Activated naive CD4-positive, alpha-beta T cell treated with anti-CD3 and anti-CD28 coated beads for 36 hours (primary cell): ENCODE measurements at regions of chr11 and their contacts with region 1.

Region 1: DNA sequence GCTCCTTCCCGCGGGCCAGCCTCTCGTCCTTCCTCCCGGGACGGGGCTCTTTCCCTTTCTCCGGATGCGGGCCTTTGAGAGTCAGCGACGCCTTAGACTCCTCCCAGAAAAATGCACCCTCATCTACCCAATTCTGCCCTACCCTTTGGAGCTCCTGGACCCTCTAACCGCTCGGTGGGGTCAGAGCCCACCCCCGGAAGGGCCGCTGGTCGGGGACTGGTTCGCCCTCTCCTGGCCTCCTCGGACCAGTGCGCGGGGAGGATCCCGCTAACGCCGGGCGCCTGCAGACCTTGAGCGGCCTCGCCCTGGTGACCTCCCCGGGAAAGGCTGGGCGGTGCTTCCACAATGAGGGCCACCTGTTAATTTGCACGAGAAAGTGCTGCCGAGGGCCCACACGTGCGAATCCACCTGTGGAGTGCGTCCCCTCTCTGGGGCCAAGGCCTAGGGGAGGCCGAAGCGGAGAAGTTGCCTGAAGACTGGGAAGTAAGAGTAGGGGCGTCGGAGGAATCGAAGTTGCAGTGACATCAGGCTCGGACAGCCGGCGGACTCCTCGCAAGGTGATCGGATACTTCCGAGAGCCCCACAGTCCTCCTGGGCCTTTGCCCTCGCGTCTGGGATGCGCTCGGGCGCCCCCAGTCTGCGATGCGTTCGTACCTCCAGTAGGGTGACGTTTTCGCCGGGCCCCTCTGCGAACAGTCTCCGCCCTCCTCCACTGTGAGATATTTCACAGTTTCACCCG is 61.5 kb downstream of the ENDOD1 start:
- DNase-seq: peak; percentile 96
- H3K4me3 Mint-ChIP-seq: peak overlapping the region; percentile 85
- H3K27ac Mint-ChIP-seq: peak overlapping the region; percentile 89
- H3K4me1 Mint-ChIP-seq: peaks cover 36% of the 10 kb centered on the region
- H3K27me3 Mint-ChIP-seq: peaks cover 5% of the 10 kb centered on the region

Region 2: GRCh38 chr11:94786264-94787126 is 364.6 kb before region 1 on chr11:
- CTCF ChIA-PET with region 1: no interaction called
- intact Hi-C with region 1: loop called (anchors 5 kb)
- DNase-seq: no peak
- H3K4me3 Mint-ChIP-seq: no peak overlapping the region
- H3K27ac Mint-ChIP-seq: no peak overlapping the region
- H3K4me1 Mint-ChIP-seq: no peaks in the 10 kb centered on the region
- H3K27me3 Mint-ChIP-seq: no peaks in the 10 kb centered on the region

Region 3: DNA sequence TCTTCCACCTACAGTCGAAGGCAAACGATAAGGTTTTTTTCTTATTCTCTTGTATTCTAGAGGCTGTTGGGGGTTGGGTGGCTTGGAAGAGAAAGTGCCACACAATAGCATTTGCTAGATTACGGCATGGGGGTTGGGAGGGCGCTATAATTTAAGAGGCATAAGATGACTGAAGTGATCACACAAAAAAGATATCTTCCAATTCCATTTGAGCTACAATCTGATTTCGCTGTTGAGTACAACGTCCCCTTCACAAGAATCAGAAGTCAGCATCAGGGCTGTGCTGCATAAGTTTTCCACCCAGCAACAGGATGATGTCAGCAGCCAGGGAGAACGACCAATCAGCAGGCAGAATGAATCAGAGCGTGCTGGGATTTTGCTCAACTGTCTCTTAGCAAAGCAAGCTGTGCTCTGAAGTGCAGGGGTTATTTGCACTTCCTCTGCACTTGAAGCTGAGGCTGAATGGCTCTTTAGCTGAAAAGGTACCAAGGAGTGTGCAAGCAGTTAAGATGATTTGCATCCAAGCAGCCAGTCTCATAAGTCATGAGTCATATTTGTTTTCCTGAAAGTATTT is 103.1 kb after region 1 on chr11:
- CTCF ChIA-PET with region 1: interaction called, 6 read pairs
- intact Hi-C with region 1: loop called (anchors 1 kb)
- DNase-seq: peak; percentile 95
- H3K4me3 Mint-ChIP-seq: peak overlapping the region; percentile 83
- H3K27ac Mint-ChIP-seq: peak overlapping the region; percentile 92
- H3K4me1 Mint-ChIP-seq: peaks cover 47% of the 10 kb centered on the region
- H3K27me3 Mint-ChIP-seq: no peaks in the 10 kb centered on the region

Region 4: GRCh38 chr11:95556342-95557163 is 405.4 kb after region 1 on chr11:
- CTCF ChIA-PET with region 1: interaction called, 12 read pairs
- intact Hi-C with region 1: loop called (anchors 1 kb)
- DNase-seq: peak; percentile 66
- H3K4me3 Mint-ChIP-seq: no peak overlapping the region
- H3K27ac Mint-ChIP-seq: peak overlapping the region; percentile 83
- H3K4me1 Mint-ChIP-seq: peaks cover 22% of the 10 kb centered on the region
- H3K27me3 Mint-ChIP-seq: no peaks in the 10 kb centered on the region

Region 5: GRCh38 chr11:95790123-95790932 is 639.2 kb after region 1 on chr11 and contains the start of gene CEP57:
- CTCF ChIA-PET with region 1: interaction called, 4 read pairs
- intact Hi-C with region 1: loop called (anchors 1 kb)
- DNase-seq: peak; percentile 98
- H3K4me3 Mint-ChIP-seq: peak within 1 kb of the TSS; percentile 99
- H3K27ac Mint-ChIP-seq: peak within 1 kb of the TSS; percentile 100
- H3K4me1 Mint-ChIP-seq: peaks cover 56% of the 10 kb centered on the region
- H3K27me3 Mint-ChIP-seq: no peaks in the 10 kb centered on the region
- total RNA-seq, gene CEP57: 110 to 115 TPM

Region 6: DNA sequence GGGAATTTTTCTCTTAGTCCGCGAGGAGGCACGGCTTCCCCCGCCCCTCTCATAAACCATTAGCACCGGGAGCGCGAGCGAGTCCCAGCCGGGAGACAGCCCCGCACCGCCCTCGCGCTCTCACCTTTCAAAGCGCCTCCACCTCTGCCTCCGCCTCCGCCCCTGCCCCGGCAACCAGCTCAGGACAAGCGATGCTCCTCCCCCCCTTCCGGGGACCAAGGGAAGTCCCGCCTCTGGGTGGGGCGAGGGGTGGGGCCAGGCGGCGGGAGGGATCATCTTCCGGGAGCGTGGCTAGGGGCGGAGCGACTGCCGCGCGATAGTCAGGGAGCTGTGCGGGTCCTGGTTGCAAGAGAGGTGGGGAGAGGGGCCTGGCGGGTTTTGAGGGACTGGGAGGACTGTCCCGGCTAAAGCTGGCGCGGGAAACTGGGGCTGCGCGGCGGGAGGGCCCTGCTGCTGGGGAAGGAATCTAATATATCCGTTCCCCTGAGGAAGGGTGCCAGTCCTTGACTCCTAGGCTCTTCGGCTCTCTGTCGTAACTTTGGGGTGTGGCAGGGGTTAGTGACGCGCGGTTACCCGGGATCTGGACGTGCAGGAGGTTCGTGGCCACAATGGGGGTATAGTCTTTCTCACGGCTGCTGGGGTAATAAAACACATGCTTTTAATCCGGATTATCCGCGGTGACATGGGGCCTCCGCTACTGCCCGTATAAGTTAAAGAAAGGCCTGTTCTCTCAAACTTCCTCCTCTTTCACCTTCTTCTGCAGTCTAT is 1238.8 kb after region 1 on chr11 and contains the starts of genes CCDC82 and JRKL:
- CTCF ChIA-PET with region 1: no interaction called
- intact Hi-C with region 1: loop called (anchors 2 kb)
- DNase-seq: peak; percentile 99
- H3K4me3 Mint-ChIP-seq: peak within 1 kb of the TSS; percentile 89
- H3K27ac Mint-ChIP-seq: peak within 1 kb of the TSS; percentile 91
- H3K4me1 Mint-ChIP-seq: peaks cover 58% of the 10 kb centered on the region
- H3K27me3 Mint-ChIP-seq: no peaks in the 10 kb centered on the region
- total RNA-seq, gene CCDC82: 32.0 to 34.0 TPM
- total RNA-seq, gene JRKL: 12.3 to 12.7 TPM